GM12878 (cell line): ENCODE measurements at regions of chr20 and their contacts with region 1.

Region 1: GRCh38 chr20:54103067-54103761 is 32.8 kb upstream of the BCAS1 start:
- DNase-seq: no peak
- ATAC-seq: peak; percentile 97
- H3K4me3 ChIP-seq: no peak overlapping the region
- H3K27ac ChIP-seq: no peak overlapping the region
- H3K4me1 ChIP-seq: no peaks in the 10 kb centered on the region
- H3K27me3 ChIP-seq: no peaks in the 10 kb centered on the region
- CTCF ChIP-seq: peak; percentile 80 to 90 (median 90)
- EP300 ChIP-seq: no peak
- POLR2A ChIP-seq: no peak
- RAD21 ChIP-seq: peak; percentile 61

Region 2: DNA sequence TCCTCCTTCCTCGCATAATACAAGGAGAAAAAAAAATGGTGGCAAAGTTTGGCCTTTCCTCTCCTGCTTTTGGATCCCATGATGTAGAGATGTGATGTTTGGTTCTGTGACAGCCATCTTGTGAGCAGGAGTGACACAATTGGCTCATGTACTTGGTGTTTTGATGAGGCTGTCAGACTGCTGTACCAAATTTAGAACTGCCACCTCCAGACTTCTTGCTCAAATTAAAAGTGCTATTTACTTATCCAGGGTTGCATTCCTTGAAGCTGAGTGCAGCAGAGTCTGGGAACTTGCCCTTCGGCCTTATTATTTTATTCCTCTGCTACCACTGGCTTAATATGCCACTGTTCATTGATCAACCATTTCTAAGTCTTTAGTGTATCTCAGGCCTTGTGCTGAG is 54.7 kb before region 1 on chr20:
- CTCF ChIA-PET with region 1: no interaction called
- POLR2A ChIA-PET with region 1: no interaction called
- RAD21 ChIA-PET with region 1: no interaction called
- SMC1A ChIA-PET with region 1: no interaction called
- in situ Hi-C with region 1: no loop called
- intact Hi-C with region 1: no loop called
- DNase-seq: no peak
- ATAC-seq: no peak
- H3K4me3 ChIP-seq: no peak overlapping the region
- H3K27ac ChIP-seq: no peak overlapping the region
- H3K4me1 ChIP-seq: peaks cover 11% of the 10 kb centered on the region
- H3K27me3 ChIP-seq: no peaks in the 10 kb centered on the region
- CTCF ChIP-seq: no peak
- EP300 ChIP-seq: no peak
- POLR2A ChIP-seq: no peak
- RAD21 ChIP-seq: no peak

Region 3: DNA sequence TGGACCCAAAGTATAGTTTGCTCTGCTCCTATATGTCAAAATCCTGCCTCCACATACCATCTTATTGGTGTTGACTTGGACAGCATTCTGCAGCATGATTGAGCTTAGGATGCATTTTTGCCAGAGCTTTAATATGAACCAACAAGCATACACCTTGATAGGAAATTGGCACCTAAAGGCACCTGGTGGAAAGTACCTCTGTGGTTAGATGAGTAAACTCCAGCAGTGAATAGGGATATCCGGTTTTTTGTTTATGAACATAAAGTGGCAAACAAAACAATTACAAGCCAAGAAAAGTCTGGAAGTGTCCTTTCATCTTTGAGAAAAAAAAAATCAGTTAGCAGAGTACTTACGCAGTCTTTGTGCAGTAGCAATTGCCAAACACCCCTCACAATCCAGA is 76.7 kb after region 1 on chr20:
- CTCF ChIA-PET with region 1: interaction called, 26 read pairs
- POLR2A ChIA-PET with region 1: no interaction called
- RAD21 ChIA-PET with region 1: interaction called, 4 read pairs
- SMC1A ChIA-PET with region 1: interaction called, 3 read pairs
- in situ Hi-C with region 1: no loop called
- intact Hi-C with region 1: no loop called
- DNase-seq: no peak
- ATAC-seq: peak; percentile 59
- H3K4me3 ChIP-seq: no peak overlapping the region
- H3K27ac ChIP-seq: no peak overlapping the region
- H3K4me1 ChIP-seq: no peaks in the 10 kb centered on the region; the same call in 1 of the 2 replicates
- H3K27me3 ChIP-seq: peaks cover 0 to 4% of the 10 kb centered on the region in 2 experiments; a peak in 3 of 4 replicates
- CTCF ChIP-seq: no peak
- EP300 ChIP-seq: no peak
- POLR2A ChIP-seq: no peak
- RAD21 ChIP-seq: no peak